Aorta (tissue), 5 donors: ENCODE measurements at regions of chr20 and their contacts with region 1.

Region 1: GRCh38 chr20:35463455-35464300 is 8.3 kb downstream of the CEP250 start:
- DNase-seq: no peak
- ATAC-seq: peak; percentile 60
- H3K4me3 ChIP-seq: no peak overlapping the region
- H3K27ac ChIP-seq: no peak overlapping the region
- H3K4me1 ChIP-seq: no peaks in the 10 kb centered on the region
- H3K27me3 ChIP-seq: no peaks in the 10 kb centered on the region

Region 2: GRCh38 chr20:35200255-35200654 is 263.4 kb before region 1 on chr20:
- intact Hi-C with region 1: no loop called
- DNase-seq: no peak
- ATAC-seq: no peak
- H3K4me3 ChIP-seq: no peak overlapping the region
- H3K27ac ChIP-seq: no peak overlapping the region
- H3K4me1 ChIP-seq: no peaks in the 10 kb centered on the region
- H3K27me3 ChIP-seq: no peaks in the 10 kb centered on the region

Region 3: GRCh38 chr20:35502352-35502751 is 38.7 kb after region 1 on chr20:
- intact Hi-C with region 1: no loop called
- DNase-seq: no peak
- ATAC-seq: no peak
- H3K4me3 ChIP-seq: no peak overlapping the region
- H3K27ac ChIP-seq: no peak overlapping the region
- H3K4me1 ChIP-seq: no peaks in the 10 kb centered on the region
- H3K27me3 ChIP-seq: no peaks in the 10 kb centered on the region

Region 4: GRCh38 chr20:35601008-35601973 is 137.6 kb after region 1 on chr20:
- intact Hi-C with region 1: loop called in 1 of 2 experiments (anchors 5 kb)
- DNase-seq: peak; percentile 87 to 92
- ATAC-seq: peak; percentile 89
- H3K4me3 ChIP-seq: peak overlapping the region in 1 of 2 donors; percentile 35
- H3K27ac ChIP-seq: no peak overlapping the region
- H3K4me1 ChIP-seq: no peaks in the 10 kb centered on the region
- H3K27me3 ChIP-seq: no peaks in the 10 kb centered on the region

Region 5: DNA sequence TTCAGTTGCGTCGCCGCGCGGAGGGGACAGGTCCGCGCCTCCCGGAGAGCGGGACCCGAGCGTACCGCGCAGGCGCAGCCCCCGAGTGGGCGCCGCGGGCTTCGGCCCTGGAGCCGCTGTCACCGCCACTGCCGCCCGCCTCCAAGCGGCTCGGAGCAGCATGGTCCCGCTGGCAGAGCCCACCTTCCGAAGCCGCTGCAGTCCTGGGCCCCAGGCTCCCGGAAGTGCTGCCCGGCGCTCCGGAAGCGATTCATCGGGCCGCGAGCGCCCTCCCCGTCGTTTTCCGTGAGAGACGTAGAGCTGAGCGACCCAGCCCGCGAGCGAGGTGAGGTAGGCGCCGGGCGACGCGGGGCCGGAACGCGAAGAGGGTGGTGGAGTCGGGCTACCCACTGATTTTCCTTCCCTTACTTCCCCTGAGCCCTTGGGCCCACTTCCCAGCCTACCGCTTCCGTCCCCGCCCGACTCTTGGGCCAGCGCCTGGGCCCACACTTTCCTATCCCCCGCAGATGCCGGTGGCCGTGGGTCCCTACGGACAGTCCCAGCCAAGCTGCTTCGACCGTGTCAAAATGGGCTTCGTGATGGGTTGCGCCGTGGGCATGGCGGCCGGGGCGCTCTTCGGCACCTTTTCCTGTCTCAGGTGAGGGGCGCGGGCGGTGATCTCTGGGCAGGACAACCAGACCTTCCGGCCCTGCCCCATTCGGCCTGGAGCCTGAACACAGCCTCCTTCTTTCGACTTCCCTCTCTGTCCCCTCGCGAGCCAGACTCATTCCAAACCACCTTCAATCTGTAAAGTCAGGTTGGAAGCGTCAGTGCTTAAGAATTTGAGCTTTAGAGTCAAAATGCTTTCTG is 235.7 kb after region 1 on chr20 and contains the starts of genes NFS1 and ROMO1:
- intact Hi-C with region 1: loop called in 1 of 2 experiments (anchors 10 kb)
- DNase-seq: peak; percentile 90 to 96
- ATAC-seq: peak; percentile 94
- H3K4me3 ChIP-seq: peak within 1 kb of the TSS; percentile 61 to 70
- H3K27ac ChIP-seq: peak within 1 kb of the TSS in 1 of 2 donors; percentile 90
- H3K4me1 ChIP-seq: peaks cover 0 to 5% of the 10 kb centered on the region in 2 donors
- H3K27me3 ChIP-seq: no peaks in the 10 kb centered on the region
- total RNA-seq, gene NFS1: 12.6 to 22.1 TPM
- total RNA-seq, gene ROMO1: 78.5 to 102 TPM

Region 6: DNA sequence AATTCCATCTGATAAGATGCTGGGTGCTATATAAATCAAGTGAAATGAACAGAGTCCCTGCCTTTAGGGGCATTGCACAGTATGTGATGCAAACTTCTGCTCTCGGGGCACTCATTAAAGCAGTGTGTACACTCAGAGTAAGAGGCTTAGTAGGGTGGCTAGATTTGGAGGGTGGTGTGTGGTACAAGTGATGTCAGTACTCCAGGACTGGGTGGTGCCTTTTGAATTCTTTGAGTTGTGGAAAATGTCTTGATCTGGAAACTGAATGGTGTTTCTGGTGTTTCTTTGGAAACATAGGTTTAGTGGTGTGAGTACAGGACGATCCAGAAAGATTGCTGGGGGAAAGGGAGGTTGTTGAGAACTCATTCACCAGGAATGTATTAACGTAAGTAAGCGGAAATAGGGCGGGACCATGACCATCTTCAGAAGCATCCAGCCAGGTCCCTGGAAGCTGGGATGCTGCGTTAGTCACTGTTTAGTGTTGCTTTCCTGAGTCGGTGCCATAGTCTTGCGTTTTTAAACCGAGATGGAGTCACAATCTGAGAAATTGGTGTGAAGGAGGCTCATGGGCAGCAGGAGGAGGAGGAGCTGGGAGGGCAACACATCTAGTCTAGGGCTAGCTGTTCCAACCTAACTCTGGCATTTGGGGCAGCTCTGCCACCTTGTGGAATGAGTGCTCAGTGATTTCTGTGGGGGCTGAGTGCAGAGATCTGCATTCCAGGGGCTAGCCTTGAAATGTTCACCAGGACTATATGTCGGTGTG is 420.3 kb after region 1 on chr20:
- intact Hi-C with region 1: loop called in 1 of 2 experiments (anchors 10 kb)
- DNase-seq: peak; percentile 82 to 89
- ATAC-seq: peak; percentile 94
- H3K4me3 ChIP-seq: no peak overlapping the region
- H3K27ac ChIP-seq: peak overlapping the region; percentile 61 to 95
- H3K4me1 ChIP-seq: no peaks in the 10 kb centered on the region
- H3K27me3 ChIP-seq: no peaks in the 10 kb centered on the region

Region 7: DNA sequence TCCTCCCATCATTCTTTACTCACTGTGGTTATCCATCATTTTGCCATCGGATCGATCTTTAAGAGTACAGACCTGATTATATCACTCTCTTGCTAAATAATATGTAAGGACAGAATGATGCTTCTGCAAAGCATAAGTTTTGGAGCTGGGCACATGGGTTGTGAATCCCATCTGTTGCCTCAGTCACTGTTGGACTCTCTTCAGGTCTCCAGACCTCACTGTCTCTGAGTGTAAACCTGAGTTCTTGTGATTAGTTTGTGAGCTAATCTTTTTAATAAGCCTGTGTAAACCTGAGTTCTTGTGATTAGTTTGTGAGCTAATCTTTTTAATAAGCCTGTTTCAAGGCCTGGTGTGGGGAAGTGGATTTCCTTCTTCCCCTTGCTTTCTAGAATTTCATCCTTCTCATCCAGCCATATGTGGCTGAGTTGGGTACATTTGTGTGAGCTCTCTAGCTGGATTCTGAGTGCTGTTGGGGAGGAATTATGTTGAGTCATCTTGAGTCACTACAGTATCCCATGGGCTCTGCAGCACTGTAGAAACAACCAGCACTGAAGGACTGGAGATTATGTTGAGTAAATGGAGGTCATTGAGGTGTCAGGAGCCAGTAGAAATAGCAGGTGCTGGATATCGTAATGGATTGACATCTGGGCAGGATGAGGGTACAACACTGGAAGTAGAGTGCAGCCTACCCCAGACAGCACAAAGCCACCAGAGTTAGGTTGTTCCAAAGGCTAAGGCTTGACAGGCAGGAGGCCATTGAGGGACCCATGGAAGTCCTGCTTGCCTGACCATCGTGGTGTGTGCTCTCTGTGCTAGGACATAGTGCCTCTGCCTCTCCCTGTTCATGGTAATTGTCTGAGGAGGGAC is 438.2 kb after region 1 on chr20:
- intact Hi-C with region 1: loop called in 1 of 2 experiments (anchors 10 kb)
- DNase-seq: no peak
- ATAC-seq: peak; percentile 70
- H3K4me3 ChIP-seq: no peak overlapping the region
- H3K27ac ChIP-seq: no peak overlapping the region
- H3K4me1 ChIP-seq: no peaks in the 10 kb centered on the region
- H3K27me3 ChIP-seq: no peaks in the 10 kb centered on the region